ENCODE measurements at regions of chr2 and their contacts with region 1.

Region 1: GRCh38 chr2:10434886-10435819 is 13.0 kb downstream of the ODC1 start:
- DNase-seq: peak; percentile 74
- H3K4me3 ChIP-seq: no peak overlapping the region
- H3K27ac ChIP-seq: no peak overlapping the region
- H3K4me1 ChIP-seq: no peaks in the 10 kb centered on the region
- H3K27me3 ChIP-seq: no peaks in the 10 kb centered on the region
- CTCF ChIP-seq: peak; percentile 96
- POLR2A ChIP-seq: no peak

Region 2: GRCh38 chr2:9799665-9800632 is 635.2 kb before region 1 on chr2:
- CTCF ChIA-PET with region 1: interaction called, 13 read pairs
- POLR2A ChIA-PET with region 1: no interaction called
- dilution Hi-C with region 1: no loop called
- intact Hi-C with region 1: no loop called
- DNase-seq: peak; percentile 82
- H3K4me3 ChIP-seq: no peak overlapping the region
- H3K27ac ChIP-seq: no peak overlapping the region
- H3K4me1 ChIP-seq: no peaks in the 10 kb centered on the region
- H3K27me3 ChIP-seq: no peaks in the 10 kb centered on the region
- CTCF ChIP-seq: peak; percentile 96 to 99
- POLR2A ChIP-seq: no peak

Region 3: GRCh38 chr2:10043906-10044601 is 391.1 kb before region 1 on chr2:
- CTCF ChIA-PET with region 1: interaction called, 13 read pairs
- POLR2A ChIA-PET with region 1: no interaction called
- dilution Hi-C with region 1: no loop called
- intact Hi-C with region 1: no loop called
- DNase-seq: peak; percentile 92
- H3K4me3 ChIP-seq: peak overlapping the region in 2 of 3 experiments; percentile 31 to 75
- H3K27ac ChIP-seq: peak overlapping the region; percentile 70
- H3K4me1 ChIP-seq: peaks cover 4% of the 10 kb centered on the region
- H3K27me3 ChIP-seq: no peaks in the 10 kb centered on the region
- CTCF ChIP-seq: no peak
- POLR2A ChIP-seq: no peak

Region 4: GRCh38 chr2:10079234-10079869 is 355.8 kb before region 1 on chr2:
- CTCF ChIA-PET with region 1: interaction called, 565 read pairs
- POLR2A ChIA-PET with region 1: no interaction called
- dilution Hi-C with region 1: no loop called
- intact Hi-C with region 1: no loop called
- DNase-seq: no peak
- H3K4me3 ChIP-seq: peak overlapping the region in 1 of 3 experiments; percentile 36
- H3K27ac ChIP-seq: no peak overlapping the region
- H3K4me1 ChIP-seq: no peaks in the 10 kb centered on the region
- H3K27me3 ChIP-seq: peaks cover 47 to 59% of the 10 kb centered on the region in 2 experiments
- CTCF ChIP-seq: no peak
- POLR2A ChIP-seq: no peak

Region 5: GRCh38 chr2:10141736-10142642 is 293.2 kb before region 1 on chr2:
- CTCF ChIA-PET with region 1: interaction called, 55 read pairs
- POLR2A ChIA-PET with region 1: interaction called, 5 read pairs
- dilution Hi-C with region 1: no loop called
- intact Hi-C with region 1: loop called (anchors 1 kb)
- DNase-seq: no peak
- H3K4me3 ChIP-seq: no peak overlapping the region
- H3K27ac ChIP-seq: no peak overlapping the region
- H3K4me1 ChIP-seq: no peaks in the 10 kb centered on the region
- H3K27me3 ChIP-seq: no peaks in the 10 kb centered on the region
- CTCF ChIP-seq: peak; percentile 50 to 65
- POLR2A ChIP-seq: no peak

Region 6: DNA sequence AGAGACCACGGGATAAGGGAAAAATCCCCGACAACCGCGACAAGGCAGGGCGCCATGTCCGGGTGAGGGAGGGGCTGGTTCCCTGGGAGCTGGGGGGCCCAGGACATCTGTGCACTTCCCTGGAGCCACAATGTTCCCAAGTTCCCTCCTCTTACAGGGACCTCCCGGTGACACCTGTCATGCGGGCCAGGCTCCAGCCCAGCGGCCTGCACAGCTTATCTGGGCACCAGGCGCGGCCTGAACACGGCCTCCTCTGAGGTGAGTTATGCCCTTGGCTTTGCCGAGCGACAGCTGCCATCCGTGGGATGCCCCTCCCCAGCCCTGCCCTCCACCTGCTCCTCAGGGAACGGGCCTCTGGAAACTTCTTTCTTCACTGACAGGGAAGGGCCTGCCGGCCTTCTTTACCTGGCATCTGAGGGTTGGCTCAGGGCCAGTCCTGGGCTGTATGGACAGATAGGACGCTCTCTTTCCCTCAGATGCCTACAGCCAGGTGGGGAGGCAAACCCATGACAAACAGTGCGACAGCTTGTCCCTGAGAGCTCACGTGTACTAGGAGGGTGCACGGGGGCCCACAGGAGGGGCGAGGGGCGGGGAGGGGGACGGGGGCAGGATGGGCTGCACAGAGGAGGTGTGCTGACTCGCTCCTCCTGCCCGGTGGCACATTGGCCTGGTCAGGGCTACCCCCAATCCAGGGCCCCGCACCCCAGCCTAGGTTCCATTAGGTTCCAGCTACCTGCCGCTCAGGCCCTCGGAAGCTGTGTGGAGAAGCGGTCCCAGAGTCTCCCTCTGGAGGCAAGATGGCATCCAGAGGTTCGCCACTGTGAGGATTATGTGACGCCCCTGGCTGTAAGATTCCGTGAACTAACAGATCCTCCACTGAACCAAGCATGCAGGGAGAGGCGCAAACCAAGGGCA is 167.3 kb before region 1 on chr2:
- CTCF ChIA-PET with region 1: interaction called, 33 read pairs
- POLR2A ChIA-PET with region 1: no interaction called
- dilution Hi-C with region 1: no loop called
- intact Hi-C with region 1: loop called (anchors 1 kb)
- DNase-seq: no peak
- H3K4me3 ChIP-seq: no peak overlapping the region
- H3K27ac ChIP-seq: no peak overlapping the region
- H3K4me1 ChIP-seq: peaks cover 3% of the 10 kb centered on the region
- H3K27me3 ChIP-seq: no peaks in the 10 kb centered on the region
- CTCF ChIP-seq: no peak
- POLR2A ChIP-seq: no peak

Region 7: GRCh38 chr2:10448208-10448645 is 13.1 kb after region 1 on chr2 and contains the start of gene ODC1:
- CTCF ChIA-PET with region 1: interaction called, 19 read pairs
- POLR2A ChIA-PET with region 1: no interaction called
- dilution Hi-C with region 1: no loop called
- intact Hi-C with region 1: no loop called
- DNase-seq: peak; percentile 83
- H3K4me3 ChIP-seq: peak within 1 kb of the TSS; percentile 71 to 94 (median 88)
- H3K27ac ChIP-seq: peak within 1 kb of the TSS; percentile 88
- H3K4me1 ChIP-seq: peaks cover 28% of the 10 kb centered on the region
- H3K27me3 ChIP-seq: no peaks in the 10 kb centered on the region
- CTCF ChIP-seq: no peak
- POLR2A ChIP-seq: peak; percentile 64
- total RNA-seq, gene ODC1: 104 and 109 TPM in 2 replicates

Measured in endothelial cell of umbilical vein (primary cell).